H1 (cell line): ENCODE measurements at regions of chr16 and their contacts with region 1.

Region 1: DNA sequence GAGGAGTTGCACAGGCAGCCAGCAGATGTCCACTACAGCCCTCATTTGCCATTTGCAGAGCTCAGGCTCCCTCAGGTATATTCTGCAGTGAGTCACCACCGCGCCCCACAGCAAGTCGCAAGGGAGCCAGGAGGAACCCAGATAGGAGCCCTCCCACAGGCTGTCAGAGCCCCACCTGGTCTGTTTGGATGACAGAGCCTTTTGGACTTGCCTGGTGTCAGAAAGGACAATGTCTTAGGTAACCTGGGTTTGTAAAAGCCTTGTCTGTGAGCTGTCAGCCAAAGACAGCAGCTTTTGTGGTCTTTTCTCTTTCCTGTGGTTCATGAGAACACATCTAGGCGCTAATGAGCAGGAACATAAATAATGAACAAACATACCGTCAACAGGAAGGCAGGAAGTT is 70.9 kb downstream of the GNAO1 start:
- DNase-seq: no peak
- H3K4me3 ChIP-seq: no peak overlapping the region
- H3K27ac ChIP-seq: no peak overlapping the region
- H3K4me1 ChIP-seq: peaks cover 0 to 3% (median 0%) of the 10 kb centered on the region in 4 experiments; a peak in 3 of 7 replicates
- H3K27me3 ChIP-seq: no peaks in the 10 kb centered on the region
- CTCF ChIP-seq: no peak
- EP300 ChIP-seq: no peak
- POLR2A ChIP-seq: no peak
- RAD21 ChIP-seq: no peak

Region 2: DNA sequence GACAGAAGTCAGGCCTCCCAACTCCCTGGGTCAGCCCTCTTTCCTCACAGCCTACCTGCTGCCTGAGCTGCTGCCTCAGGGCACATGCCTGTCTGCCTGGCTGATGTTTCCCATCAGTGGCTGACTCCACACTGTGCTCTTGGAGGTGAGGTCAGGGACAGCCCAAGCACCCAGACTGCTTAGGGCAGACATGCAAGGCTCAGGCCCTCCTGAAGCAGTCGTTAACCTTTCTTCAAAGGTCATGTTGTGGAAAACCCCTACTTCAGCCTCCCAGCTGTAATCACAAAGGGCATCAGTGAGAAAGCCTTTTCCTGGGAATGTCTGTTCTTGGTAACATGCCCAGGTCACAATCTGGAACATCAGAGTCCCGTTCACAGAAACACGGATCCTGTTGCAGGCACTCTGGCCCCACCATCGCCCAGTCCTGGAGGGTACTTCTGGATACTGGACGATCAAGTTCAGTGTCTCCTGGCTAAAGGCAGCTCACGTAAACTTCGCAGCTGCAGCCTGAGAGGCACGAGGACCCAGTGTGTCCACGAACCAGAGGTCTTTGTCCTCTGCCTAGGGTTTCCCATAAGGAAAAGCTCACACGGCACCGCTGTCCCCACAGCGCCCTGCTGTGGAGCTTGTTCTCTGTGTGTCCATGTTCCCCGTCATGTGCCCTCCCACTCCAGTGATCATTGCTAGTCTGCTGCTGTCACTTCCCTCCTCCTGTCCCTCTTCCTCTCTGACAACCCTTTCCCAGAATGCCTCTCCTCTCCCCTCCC is 15.9 kb before region 1 on chr16:
- CTCF ChIA-PET with region 1: interaction called, 12 read pairs
- POLR2A ChIA-PET with region 1: interaction called, 3 read pairs
- DNase-seq: peak in 1 of 2 experiments; percentile 38
- H3K4me3 ChIP-seq: no peak overlapping the region
- H3K27ac ChIP-seq: no peak overlapping the region
- H3K4me1 ChIP-seq: peaks cover 2 to 9% (median 5%) of the 10 kb centered on the region in 4 experiments; a peak in 5 of 7 replicates
- H3K27me3 ChIP-seq: no peaks in the 10 kb centered on the region; a peak in 1 of 7 replicates
- CTCF ChIP-seq: no peak
- EP300 ChIP-seq: no peak
- POLR2A ChIP-seq: no peak
- RAD21 ChIP-seq: 0 out of 4 replicates have a peak, but pooled peaks have one; percentile 8 to 10